Dorsolateral prefrontal cortex (tissue), 120 donors: ENCODE measurements at regions of chr20 and their contacts with region 1.

Region 1: DNA sequence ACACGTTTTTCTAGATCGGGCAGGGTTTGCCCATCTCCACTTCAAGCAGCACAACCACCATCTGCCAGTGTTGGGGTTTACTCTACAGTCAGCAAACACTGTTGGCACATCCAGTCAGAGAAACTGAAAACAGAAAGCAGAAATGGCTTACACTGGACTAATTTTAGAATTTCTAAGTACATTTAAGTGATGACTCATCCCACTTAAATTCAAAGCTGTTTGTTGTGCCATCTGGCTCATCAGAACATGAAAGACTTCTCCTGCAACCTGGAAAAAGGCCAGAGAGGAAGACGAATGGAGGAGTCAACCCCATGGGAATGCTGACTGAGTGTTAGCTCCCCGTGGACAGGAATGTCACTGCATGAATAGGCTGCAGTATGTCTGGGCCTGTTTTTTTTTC is 21.8 kb downstream of the FAM209B start:
- DNase-seq: peak in 5 of 10 donors; percentile 14 to 54 (median 33)
- H3K4me3 ChIP-seq: no peak overlapping the region
- H3K27ac ChIP-seq: peak overlapping the region in 1 of 59 donors; percentile 26
- H3K27me3 ChIP-seq: peaks cover 0 to 14% (median 0%) of the 10 kb centered on the region in 45 donors
- CTCF ChIP-seq: peak in 2 of 56 donors; percentile 11 to 17

Region 2: GRCh38 chr20:56497326-56497725 is 57.5 kb before region 1 on chr20:
- intact Hi-C with region 1: no loop called
- DNase-seq: no peak
- H3K4me3 ChIP-seq: no peak overlapping the region
- H3K27ac ChIP-seq: no peak overlapping the region
- H3K27me3 ChIP-seq: no peaks in the 10 kb centered on the region
- CTCF ChIP-seq: no peak

Region 3: DNA sequence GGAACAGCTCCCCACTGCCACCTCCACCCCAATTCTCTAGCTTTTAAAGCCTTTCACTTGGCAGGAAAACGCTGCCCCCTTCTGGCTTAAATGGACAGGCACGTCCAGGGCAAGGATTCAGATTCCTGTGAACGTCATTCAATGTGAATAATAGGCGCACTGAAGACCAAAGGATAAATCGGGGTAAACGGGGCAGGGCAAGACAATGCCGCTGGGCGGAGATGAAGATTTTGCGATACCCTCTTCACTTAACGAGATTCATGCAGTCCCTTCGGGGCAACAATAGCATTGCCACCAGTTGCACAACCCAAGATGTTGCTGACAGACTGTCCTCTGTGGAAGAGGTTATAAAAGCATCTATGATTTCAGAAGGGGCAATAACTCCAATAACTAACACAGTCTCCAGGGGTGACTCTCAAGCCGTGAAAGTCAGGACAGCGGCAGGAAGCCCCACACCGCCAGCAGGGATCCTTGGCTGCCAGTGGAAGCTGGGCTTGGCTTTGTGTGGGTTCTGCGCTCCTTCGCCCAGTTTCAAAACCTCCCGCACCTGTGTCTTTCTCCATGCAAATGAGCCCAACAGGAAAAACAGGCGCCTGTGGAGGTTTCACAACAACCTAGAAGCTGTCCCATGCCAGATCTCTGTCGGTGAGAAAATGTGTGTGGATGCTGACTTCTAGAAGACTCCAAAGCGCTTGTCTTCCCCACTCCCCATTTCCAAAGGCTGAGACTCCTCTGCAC is 419.8 kb after region 1 on chr20:
- intact Hi-C with region 1: loop called (anchors 5 to 10 kb)
- DNase-seq: peak in 5 of 10 donors; percentile 38 to 49 (median 44)
- H3K4me3 ChIP-seq: no peak overlapping the region
- H3K27ac ChIP-seq: no peak overlapping the region
- H3K27me3 ChIP-seq: peaks cover 0 to 88% (median 41%) of the 10 kb centered on the region in 45 donors
- CTCF ChIP-seq: peak in 54 of 56 donors; percentile 13 to 69 (median 49)